Activated T-helper 1 cell treated with anti-CD3 and anti-CD28 coated beads, Interleukin-12 subunit alpha, Interleukin-12 subunit beta, Interleukin-2, Interleukin-4 antibody, amounts not matched to agents 30 ng/mL and 10 ng/mL and 1 ng/mL, durations not matched to agents 14 hours and 24 hours and 36 hours (primary cell): ENCODE measurements at regions of chr11 and their contacts with region 1.

Region 1: DNA sequence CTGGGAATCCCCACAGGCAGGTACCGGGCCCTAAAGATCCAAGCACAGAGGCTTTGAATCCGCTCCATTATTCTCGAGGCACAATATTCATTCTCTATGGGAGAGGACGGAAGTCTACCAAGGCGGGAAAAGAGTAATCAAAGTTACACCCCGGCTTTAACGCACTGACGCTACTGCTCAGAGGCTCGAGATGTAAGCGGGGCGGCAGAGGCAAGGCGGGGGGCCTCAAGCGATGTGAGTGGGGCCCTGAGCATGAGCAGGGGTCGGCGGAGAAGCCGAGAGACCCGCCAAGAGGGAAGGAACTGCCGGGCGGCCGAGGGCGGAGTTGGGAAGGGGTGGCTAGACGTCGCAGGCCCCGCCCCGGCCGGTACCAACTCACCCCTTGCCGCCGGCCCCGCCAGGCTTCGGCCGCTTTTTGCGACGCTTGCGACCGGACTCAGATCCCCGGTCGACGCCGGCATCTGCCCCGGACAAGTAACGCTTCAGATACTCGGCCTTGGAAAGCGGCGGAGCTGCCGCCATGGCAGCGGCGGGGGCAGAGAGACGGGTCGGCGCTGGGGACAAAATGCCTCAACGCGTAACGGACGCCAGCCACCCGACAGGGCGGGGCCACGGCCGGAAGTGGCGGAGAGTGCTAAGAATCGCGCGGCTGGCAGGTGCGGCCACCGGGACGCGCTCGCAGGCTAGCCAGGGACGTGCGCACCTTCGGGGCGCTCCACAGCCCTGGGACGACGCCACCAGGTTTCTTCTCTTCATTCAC is at the start of gene BUD13:
- DNase-seq: peak; percentile 93
- H3K4me3 Mint-ChIP-seq: peak within 1 kb of the TSS; percentile 99
- H3K27ac Mint-ChIP-seq: peak within 1 kb of the TSS; percentile 97
- H3K4me1 Mint-ChIP-seq: peaks cover 46% of the 10 kb centered on the region
- H3K27me3 Mint-ChIP-seq: no peaks in the 10 kb centered on the region
- total RNA-seq, gene BUD13: 30.0 and 33.4 TPM in 2 replicates

Region 2: GRCh38 chr11:116742104-116742503 is 30.5 kb before region 1 on chr11:
- intact Hi-C with region 1: no loop called
- DNase-seq: no peak
- H3K4me3 Mint-ChIP-seq: no peak overlapping the region
- H3K27ac Mint-ChIP-seq: no peak overlapping the region
- H3K4me1 Mint-ChIP-seq: peaks cover 13% of the 10 kb centered on the region
- H3K27me3 Mint-ChIP-seq: no peaks in the 10 kb centered on the region

Region 3: DNA sequence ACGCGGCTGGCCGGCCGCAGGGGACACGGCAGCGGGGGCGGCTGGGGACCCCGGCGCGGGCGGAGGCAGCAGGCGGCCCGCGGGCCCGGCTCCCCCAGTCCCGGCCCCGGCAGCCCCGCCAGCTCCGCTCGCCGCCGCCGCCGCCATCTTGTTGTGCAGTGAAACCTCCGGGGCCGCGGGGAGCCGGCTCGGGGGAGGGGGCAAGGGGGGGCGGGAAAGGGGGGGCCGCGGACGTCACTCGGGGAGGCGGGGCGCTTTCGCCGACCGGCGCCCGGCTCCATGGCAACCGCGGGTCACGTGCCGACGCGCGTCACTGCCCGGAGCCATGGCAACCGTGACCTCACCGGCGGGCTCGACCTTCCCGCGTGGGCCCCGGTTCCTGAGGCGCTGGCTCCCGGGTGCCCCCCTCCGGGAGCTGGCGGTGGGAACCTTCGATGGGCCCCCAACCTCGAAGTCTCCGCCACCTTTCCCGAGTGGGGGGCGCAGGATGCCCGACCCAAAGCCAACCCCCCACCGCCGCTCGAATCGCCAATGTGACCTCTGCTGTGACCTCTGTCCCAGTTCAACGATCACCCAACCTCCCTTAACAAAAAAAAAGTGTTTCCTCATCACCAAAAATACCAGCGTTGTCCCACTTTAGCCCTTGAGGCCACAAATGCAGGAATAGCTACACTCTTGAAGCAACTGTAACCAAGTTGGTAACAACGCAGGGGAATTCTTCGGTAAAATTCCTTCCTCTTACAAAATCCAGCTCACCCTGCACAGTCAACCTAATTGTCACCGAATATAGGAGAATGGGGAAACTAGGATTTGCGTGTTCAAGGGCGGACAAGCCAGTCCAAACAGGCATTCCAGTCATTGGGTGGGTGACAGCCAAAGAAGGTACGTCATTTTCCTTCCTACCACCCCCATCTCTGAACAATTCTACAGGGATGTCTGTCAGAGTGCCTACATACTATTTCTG is 325.9 kb after region 1 on chr11 and contains the start of gene SIK3:
- intact Hi-C with region 1: loop called (anchors 2 kb)
- DNase-seq: peak; percentile 90
- H3K4me3 Mint-ChIP-seq: peak within 1 kb of the TSS; percentile 100
- H3K27ac Mint-ChIP-seq: peak within 1 kb of the TSS; percentile 99
- H3K4me1 Mint-ChIP-seq: peaks cover 50% of the 10 kb centered on the region
- H3K27me3 Mint-ChIP-seq: peaks cover 3% of the 10 kb centered on the region
- total RNA-seq, gene SIK3: 49.9 and 54.2 TPM in 2 replicates

Region 4: GRCh38 chr11:117143871-117144476 is 371.4 kb after region 1 on chr11 and contains the start of gene PAFAH1B2:
- intact Hi-C with region 1: loop called (anchors 1 kb)
- DNase-seq: peak; percentile 93
- H3K4me3 Mint-ChIP-seq: peak within 1 kb of the TSS; percentile 97
- H3K27ac Mint-ChIP-seq: peak within 1 kb of the TSS; percentile 90
- H3K4me1 Mint-ChIP-seq: peaks cover 29% of the 10 kb centered on the region
- H3K27me3 Mint-ChIP-seq: peaks cover 8% of the 10 kb centered on the region
- total RNA-seq, gene PAFAH1B2: 71.8 and 83.6 TPM in 2 replicates

Region 5: DNA sequence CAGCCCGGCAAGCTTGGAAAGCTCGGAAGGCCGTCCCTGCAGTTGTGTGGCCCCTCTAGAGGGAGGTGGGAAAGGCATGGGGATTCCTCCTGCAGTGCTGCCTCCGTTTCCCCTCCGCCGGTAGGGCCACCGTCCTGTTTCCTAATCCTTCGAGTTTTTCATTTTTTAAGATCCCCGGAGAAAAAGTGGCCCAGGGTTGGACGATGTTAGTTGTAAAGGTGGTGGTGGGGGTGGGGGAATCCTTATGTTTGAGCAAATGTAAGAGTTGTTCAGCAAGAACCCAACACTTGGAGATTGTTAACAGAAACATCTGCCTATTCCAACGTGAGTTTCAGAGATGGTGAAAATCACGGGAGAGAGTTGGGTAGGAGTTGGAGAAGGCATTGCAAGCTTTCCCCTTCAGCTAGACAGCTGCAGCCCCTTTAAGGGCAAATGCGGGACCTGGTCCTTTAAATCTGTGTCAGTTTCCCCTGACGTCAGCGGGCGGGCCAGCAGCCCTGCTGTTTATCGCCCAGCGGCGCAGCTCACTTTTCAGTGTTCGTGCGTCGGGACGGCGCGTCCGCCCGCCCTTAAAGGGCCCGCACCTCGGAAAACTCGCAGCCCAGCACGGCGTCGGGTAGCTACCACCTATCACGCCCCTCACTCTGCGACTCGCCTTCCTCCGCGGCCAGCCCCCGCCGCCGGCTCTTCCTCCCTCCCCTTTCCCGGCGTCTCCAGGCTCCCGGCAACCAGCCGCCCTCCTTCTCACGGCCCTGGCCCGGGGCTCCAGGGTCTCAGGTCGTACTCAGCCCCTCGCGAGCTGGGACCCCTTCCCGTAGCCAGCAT is 405.8 kb after region 1 on chr11 and contains the start of gene SIDT2:
- intact Hi-C with region 1: loop called (anchors 1 kb)
- DNase-seq: peak; percentile 89
- H3K4me3 Mint-ChIP-seq: peak within 1 kb of the TSS; percentile 95
- H3K27ac Mint-ChIP-seq: peak within 1 kb of the TSS; percentile 86
- H3K4me1 Mint-ChIP-seq: peaks cover 33% of the 10 kb centered on the region
- H3K27me3 Mint-ChIP-seq: no peaks in the 10 kb centered on the region
- total RNA-seq, gene SIDT2: 24.3 and 32.2 TPM in 2 replicates